ENCODE measurements at regions of chr17 and their contacts with region 1.

Region 1: GRCh38 chr17:40168262-40168832 is 8.9 kb upstream of the RAPGEFL1 start:
- DNase-seq: peak in 7 of 9 donors; percentile 40 to 70 (median 62)
- ATAC-seq: peak; percentile 90
- H3K4me3 ChIP-seq: no peak overlapping the region
- H3K4me3 Mint-ChIP-seq: no peak overlapping the region
- H3K27ac ChIP-seq: peak overlapping the region; percentile 42
- H3K27ac Mint-ChIP-seq: peak overlapping the region; percentile 44 to 93 (median 81)
- H3K4me1 ChIP-seq: no peaks in the 10 kb centered on the region
- H3K4me1 Mint-ChIP-seq: peaks cover 9 to 20% (median 15%) of the 10 kb centered on the region in 7 donors
- H3K27me3 ChIP-seq: no peaks in the 10 kb centered on the region
- H3K27me3 Mint-ChIP-seq: no peaks in the 10 kb centered on the region

Region 2: GRCh38 chr17:40018211-40019121 is 149.9 kb before region 1 on chr17:
- CTCF ChIA-PET with region 1: interaction called, 5 read pairs
- POLR2A ChIA-PET with region 1: no interaction called
- intact Hi-C with region 1: loop called (anchors 1 kb)
- DNase-seq: no peak
- ATAC-seq: no peak
- H3K4me3 ChIP-seq: no peak overlapping the region
- H3K4me3 Mint-ChIP-seq: no peak overlapping the region
- H3K27ac ChIP-seq: no peak overlapping the region
- H3K27ac Mint-ChIP-seq: peak overlapping the region in 2 of 9 donors; percentile 21 to 25
- H3K4me1 ChIP-seq: no peaks in the 10 kb centered on the region
- H3K4me1 Mint-ChIP-seq: peaks cover 0 to 8% (median 5%) of the 10 kb centered on the region in 7 donors
- H3K27me3 ChIP-seq: no peaks in the 10 kb centered on the region
- H3K27me3 Mint-ChIP-seq: peaks cover 0 to 2% (median 0%) of the 10 kb centered on the region in 5 donors

Region 3: GRCh38 chr17:40062329-40063186 is 105.8 kb before region 1 on chr17 and contains the start of gene THRA:
- CTCF ChIA-PET with region 1: interaction called, 5 read pairs
- POLR2A ChIA-PET with region 1: interaction called, 3 read pairs
- intact Hi-C with region 1: loop called (anchors 1 to 5 kb)
- DNase-seq: peak; percentile 56 to 77 (median 71)
- ATAC-seq: peak; percentile 93
- H3K4me3 ChIP-seq: peak within 1 kb of the TSS; percentile 81
- H3K4me3 Mint-ChIP-seq: peak within 1 kb of the TSS; percentile 86 to 97 (median 94)
- H3K27ac ChIP-seq: peak within 1 kb of the TSS; percentile 84
- H3K27ac Mint-ChIP-seq: peak within 1 kb of the TSS; percentile 35 to 95 (median 89)
- H3K4me1 ChIP-seq: peaks cover 21 to 34% of the 10 kb centered on the region in 2 donors
- H3K4me1 Mint-ChIP-seq: peaks cover 32 to 50% (median 43%) of the 10 kb centered on the region in 7 donors
- H3K27me3 ChIP-seq: no peaks in the 10 kb centered on the region
- H3K27me3 Mint-ChIP-seq: peaks cover 0 to 62% (median 0%) of the 10 kb centered on the region in 5 donors
- total RNA-seq, gene THRA: 3.2 to 55.9 (median 48.4) TPM

Region 4: GRCh38 chr17:40130352-40131042 is 37.9 kb before region 1 on chr17:
- CTCF ChIA-PET with region 1: interaction called, 10 read pairs
- POLR2A ChIA-PET with region 1: interaction called, 3 read pairs
- intact Hi-C with region 1: no loop called
- DNase-seq: no peak
- ATAC-seq: peak; percentile 80
- H3K4me3 ChIP-seq: no peak overlapping the region
- H3K4me3 Mint-ChIP-seq: no peak overlapping the region
- H3K27ac ChIP-seq: no peak overlapping the region
- H3K27ac Mint-ChIP-seq: peak overlapping the region in 7 of 9 donors; percentile 14 to 78 (median 57)
- H3K4me1 ChIP-seq: no peaks in the 10 kb centered on the region
- H3K4me1 Mint-ChIP-seq: peaks cover 10 to 41% (median 27%) of the 10 kb centered on the region in 7 donors
- H3K27me3 ChIP-seq: no peaks in the 10 kb centered on the region
- H3K27me3 Mint-ChIP-seq: no peaks in the 10 kb centered on the region

Region 5: GRCh38 chr17:40150276-40150675 is 18.1 kb before region 1 on chr17:
- CTCF ChIA-PET with region 1: interaction called, 13 read pairs
- POLR2A ChIA-PET with region 1: interaction called, 6 read pairs
- intact Hi-C with region 1: no loop called
- DNase-seq: no peak
- ATAC-seq: no peak
- H3K4me3 ChIP-seq: no peak overlapping the region
- H3K4me3 Mint-ChIP-seq: peak overlapping the region in 1 of 10 donors; percentile 1
- H3K27ac ChIP-seq: no peak overlapping the region
- H3K27ac Mint-ChIP-seq: peak overlapping the region in 5 of 9 donors; percentile 44 to 79 (median 71)
- H3K4me1 ChIP-seq: peaks cover 0 to 9% of the 10 kb centered on the region in 2 donors
- H3K4me1 Mint-ChIP-seq: peaks cover 39 to 77% (median 54%) of the 10 kb centered on the region in 7 donors
- H3K27me3 ChIP-seq: no peaks in the 10 kb centered on the region
- H3K27me3 Mint-ChIP-seq: no peaks in the 10 kb centered on the region

Region 6: DNA sequence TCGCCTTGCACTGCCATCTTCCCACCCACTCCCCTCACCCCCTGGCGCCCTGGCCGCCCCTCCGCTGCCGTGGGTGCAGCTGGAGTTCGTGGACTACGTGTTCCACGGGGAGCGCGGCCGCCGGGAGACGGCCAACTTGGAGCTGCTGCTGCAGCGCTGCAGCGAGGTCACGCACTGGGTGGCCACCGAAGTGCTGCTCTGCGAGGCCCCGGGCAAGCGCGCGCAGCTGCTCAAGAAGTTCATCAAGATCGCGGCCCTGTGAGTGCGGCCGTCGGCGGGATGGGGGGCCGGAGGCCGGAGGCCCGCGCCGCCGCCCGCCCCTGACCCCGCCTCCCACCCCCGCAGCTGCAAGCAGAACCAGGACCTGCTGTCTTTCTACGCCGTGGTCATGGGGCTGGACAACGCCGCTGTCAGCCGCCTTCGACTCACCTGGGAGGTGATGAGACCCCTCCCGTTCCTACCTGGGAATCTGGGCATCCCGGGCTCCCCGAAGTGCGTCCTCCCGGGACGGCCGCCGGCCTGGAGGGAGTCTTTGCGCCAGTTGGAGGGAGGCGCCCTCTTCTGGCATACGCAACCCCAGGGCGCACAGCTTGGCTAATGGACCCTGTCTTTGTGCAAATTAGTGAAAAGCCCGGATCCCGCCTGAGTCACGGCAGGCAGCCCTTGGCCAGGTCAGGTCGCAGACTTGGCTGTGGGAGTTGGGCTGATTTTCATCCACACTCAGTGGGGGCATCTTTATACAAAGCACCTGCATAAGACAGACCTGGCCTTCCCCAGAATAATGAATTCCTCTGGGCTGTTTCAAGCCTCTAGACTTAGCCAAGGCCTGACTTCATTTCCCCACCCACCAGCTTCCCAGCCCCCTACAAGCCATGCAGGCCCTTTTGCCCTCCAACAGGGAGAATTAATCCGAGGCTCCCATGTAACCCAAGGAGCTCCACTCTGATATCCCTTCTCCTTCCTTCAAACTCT is 23.2 kb after region 1 on chr17:
- CTCF ChIA-PET with region 1: interaction called, 6 read pairs
- POLR2A ChIA-PET with region 1: no interaction called
- intact Hi-C with region 1: loop called in 1 of 2 experiments (anchors 2 kb)
- DNase-seq: peak; percentile 36 to 73 (median 52)
- ATAC-seq: peak; percentile 92
- H3K4me3 ChIP-seq: peak overlapping the region; percentile 63
- H3K4me3 Mint-ChIP-seq: peak overlapping the region; percentile 88 to 97 (median 94)
- H3K27ac ChIP-seq: peak overlapping the region; percentile 29
- H3K27ac Mint-ChIP-seq: peak overlapping the region in 4 of 9 donors; percentile 22 to 58 (median 36)
- H3K4me1 ChIP-seq: peaks cover 0 to 3% of the 10 kb centered on the region in 2 donors
- H3K4me1 Mint-ChIP-seq: peaks cover 0 to 27% (median 13%) of the 10 kb centered on the region in 7 donors
- H3K27me3 ChIP-seq: no peaks in the 10 kb centered on the region
- H3K27me3 Mint-ChIP-seq: peaks cover 0 to 4% (median 0%) of the 10 kb centered on the region in 5 donors

Measured in naive thymus-derived CD4-positive, alpha-beta T cell (primary cell).